ENCODE measurements at regions of chr16 and their contacts with region 1.

Region 1: DNA sequence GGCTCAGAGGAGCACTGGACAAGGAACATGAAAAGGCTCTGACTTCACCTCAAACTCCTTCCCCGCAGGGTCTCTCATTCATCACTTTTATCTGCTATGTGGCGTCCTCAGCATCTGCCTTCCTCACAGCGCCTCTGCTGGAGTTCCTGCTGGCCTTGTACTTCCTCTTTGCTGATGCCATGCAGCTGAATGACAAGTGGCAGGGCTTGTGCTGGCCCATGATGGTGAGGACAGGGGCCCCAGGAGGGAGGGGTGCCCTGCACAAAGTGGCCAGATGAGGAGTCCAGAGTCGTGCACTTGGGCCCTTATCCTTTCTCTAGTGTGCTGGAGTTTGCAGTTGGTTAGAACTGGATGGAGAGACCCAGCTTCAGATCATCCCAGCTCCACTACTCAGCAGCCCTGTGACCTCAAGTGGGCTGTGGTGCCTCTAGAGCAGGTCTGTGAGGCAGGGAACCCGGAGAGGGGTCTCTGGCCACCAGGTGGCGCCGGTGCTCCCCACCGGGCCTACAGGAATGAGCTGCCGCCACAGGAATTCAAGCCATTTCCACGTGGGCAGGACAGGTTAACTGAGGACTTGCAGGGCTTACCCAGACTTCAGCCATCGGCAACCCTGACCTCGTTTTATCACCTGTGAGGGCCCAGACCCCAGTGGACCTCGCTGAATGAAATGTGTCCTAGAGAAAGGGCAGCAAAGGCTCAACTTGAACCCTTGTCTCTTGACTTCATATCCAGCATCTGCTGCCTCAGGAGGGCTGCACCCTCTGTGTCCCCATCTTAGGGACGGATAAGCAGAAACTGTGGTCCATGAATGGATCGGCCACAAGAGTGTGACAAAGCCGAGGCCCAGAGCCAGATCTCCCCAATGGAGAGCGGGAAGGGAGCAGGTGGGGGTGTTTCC is 4.0 kb downstream of the CMTM3 start:
- DNase-seq: peak; percentile 89 to 92
- H3K4me3 ChIP-seq: no peak overlapping the region
- H3K27ac ChIP-seq: peak overlapping the region; percentile 77 to 78
- H3K4me1 ChIP-seq: peaks cover 3 to 14% of the 10 kb centered on the region in 2 donors
- H3K27me3 ChIP-seq: no peaks in the 10 kb centered on the region
- CTCF ChIP-seq: peak; percentile 69 to 94 (median 86)
- POLR2A ChIP-seq: no peak

Region 2: GRCh38 chr16:66169817-66170216 is 438.7 kb before region 1 on chr16:
- intact Hi-C with region 1: loop called (anchors 5 kb)
- DNase-seq: no peak
- H3K4me3 ChIP-seq: no peak overlapping the region
- H3K27ac ChIP-seq: no peak overlapping the region
- H3K4me1 ChIP-seq: no peaks in the 10 kb centered on the region
- H3K27me3 ChIP-seq: no peaks in the 10 kb centered on the region
- CTCF ChIP-seq: no peak
- POLR2A ChIP-seq: no peak